ENCODE measurements at regions of chr11 and their contacts with region 1.

Region 1: DNA sequence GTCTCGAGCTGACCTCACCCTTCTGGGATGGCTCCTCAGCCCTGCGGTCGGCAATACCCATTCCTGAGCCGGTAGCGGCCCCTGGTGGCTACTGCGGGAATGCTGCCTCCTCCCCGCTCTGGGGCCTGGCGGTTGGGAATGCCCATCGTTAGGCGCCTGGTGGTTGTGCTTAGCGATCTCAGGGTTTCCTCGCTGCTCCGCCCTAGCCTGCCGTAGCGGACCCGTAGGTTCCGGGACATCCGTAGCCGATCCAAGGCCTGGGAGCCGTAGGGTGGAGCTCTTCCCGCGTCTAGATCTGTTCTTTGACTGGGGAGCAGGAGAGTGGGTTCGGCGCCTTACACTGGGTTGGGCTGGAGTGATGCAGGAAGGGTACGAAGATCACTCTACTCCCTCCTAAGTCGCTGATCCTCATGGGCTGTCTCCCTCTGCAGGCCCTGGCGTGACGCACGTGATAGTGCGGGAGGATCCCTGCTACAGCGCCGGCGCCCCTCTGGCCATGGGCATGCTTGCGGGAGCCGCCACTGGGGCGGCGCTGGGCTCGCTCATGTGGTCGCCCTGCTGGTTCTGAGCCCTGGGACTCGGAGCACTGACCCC is 14.8 kb downstream of the PLEKHB1 start:
- DNase-seq: peak; percentile 71 to 85 (median 78)
- H3K4me3 ChIP-seq: no peak overlapping the region
- H3K4me3 Mint-ChIP-seq: peak overlapping the region in 3 of 7 donors; percentile 42 to 61 (median 48)
- H3K27ac ChIP-seq: no peak overlapping the region
- H3K27ac Mint-ChIP-seq: no peak overlapping the region
- H3K4me1 ChIP-seq: peaks cover 7% of the 10 kb centered on the region
- H3K4me1 Mint-ChIP-seq: peaks cover 7 to 13% (median 8%) of the 10 kb centered on the region in 3 donors
- H3K27me3 ChIP-seq: no peaks in the 10 kb centered on the region
- H3K27me3 Mint-ChIP-seq: peaks cover 0 to 3% of the 10 kb centered on the region in 2 donors

Region 2: GRCh38 chr11:73633999-73634398 is 27.1 kb before region 1 on chr11:
- CTCF ChIA-PET with region 1: interaction called, 14 read pairs
- POLR2A ChIA-PET with region 1: no interaction called
- DNase-seq: peak in 1 of 5 donors; percentile 16
- H3K4me3 ChIP-seq: no peak overlapping the region
- H3K4me3 Mint-ChIP-seq: no peak overlapping the region
- H3K27ac ChIP-seq: no peak overlapping the region
- H3K27ac Mint-ChIP-seq: peak overlapping the region in 1 of 8 donors; percentile 51
- H3K4me1 ChIP-seq: peaks cover 12% of the 10 kb centered on the region
- H3K4me1 Mint-ChIP-seq: peaks cover 0 to 5% (median 0%) of the 10 kb centered on the region in 3 donors
- H3K27me3 ChIP-seq: no peaks in the 10 kb centered on the region
- H3K27me3 Mint-ChIP-seq: peaks cover 0 to 4% of the 10 kb centered on the region in 2 donors

Region 3: DNA sequence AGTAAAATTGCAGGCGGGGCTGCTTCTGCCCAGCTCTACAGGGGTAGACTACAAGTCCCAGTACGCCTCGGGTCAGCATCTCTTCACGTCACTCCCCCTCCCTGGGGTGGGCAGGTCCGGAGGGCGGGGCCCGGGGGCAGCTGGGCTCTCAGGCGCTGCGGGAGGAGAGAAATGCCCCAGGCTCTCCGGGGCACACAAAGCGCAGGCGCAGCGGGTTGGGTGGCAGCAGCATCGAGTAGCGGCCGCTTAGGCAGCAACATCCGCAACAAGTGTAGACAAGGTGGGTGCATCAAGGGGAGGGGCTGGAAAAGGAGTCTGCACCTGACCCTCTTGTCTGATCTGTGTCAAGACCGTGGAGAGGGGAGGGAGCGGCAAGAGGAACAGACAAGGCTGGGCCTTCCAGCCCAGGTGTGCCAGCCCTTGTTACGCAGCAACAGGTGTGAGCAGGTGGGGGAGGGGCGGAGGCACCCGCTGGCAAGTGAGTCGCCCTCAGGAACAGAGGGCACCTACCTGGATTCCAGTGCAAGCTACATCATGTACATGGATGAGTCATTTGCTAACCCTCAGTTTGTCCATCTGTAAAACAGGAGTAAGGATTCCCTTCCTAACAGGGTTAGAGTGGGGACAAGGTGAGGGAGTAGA is 13.6 kb before region 1 on chr11:
- CTCF ChIA-PET with region 1: interaction called, 17 read pairs
- POLR2A ChIA-PET with region 1: no interaction called
- DNase-seq: peak; percentile 87 to 96 (median 92)
- H3K4me3 ChIP-seq: peak overlapping the region; percentile 83
- H3K4me3 Mint-ChIP-seq: peak overlapping the region; percentile 49 to 96 (median 89)
- H3K27ac ChIP-seq: peak overlapping the region; percentile 7
- H3K27ac Mint-ChIP-seq: peak overlapping the region; percentile 82 to 96 (median 94)
- H3K4me1 ChIP-seq: peaks cover 15% of the 10 kb centered on the region
- H3K4me1 Mint-ChIP-seq: peaks cover 10 to 27% (median 21%) of the 10 kb centered on the region in 3 donors
- H3K27me3 ChIP-seq: no peaks in the 10 kb centered on the region
- H3K27me3 Mint-ChIP-seq: no peaks in the 10 kb centered on the region